ENCODE measurements at regions of chr3 and their contacts with region 1.

Region 1: GRCh38 chr3:42443819-42444436 is 33.5 kb upstream of the LYZL4 start:
- DNase-seq: peak; percentile 36 to 72 (median 59)
- H3K4me3 ChIP-seq: no peak overlapping the region
- H3K27ac ChIP-seq: no peak overlapping the region
- H3K4me1 ChIP-seq: no peaks in the 10 kb centered on the region
- H3K27me3 ChIP-seq: no peaks in the 10 kb centered on the region
- CTCF ChIP-seq: peak in 2 of 3 donors; percentile 37 to 47
- EP300 ChIP-seq: no peak
- POLR2A ChIP-seq: no peak

Region 2: GRCh38 chr3:41673650-41674049 is 770.3 kb before region 1 on chr3:
- intact Hi-C with region 1: loop called in 1 of 4 experiments (anchors 5 kb)
- DNase-seq: no peak
- H3K4me3 ChIP-seq: no peak overlapping the region
- H3K27ac ChIP-seq: no peak overlapping the region
- H3K4me1 ChIP-seq: no peaks in the 10 kb centered on the region
- H3K27me3 ChIP-seq: no peaks in the 10 kb centered on the region
- CTCF ChIP-seq: no peak
- EP300 ChIP-seq: no peak
- POLR2A ChIP-seq: no peak

Region 3: GRCh38 chr3:42229942-42230688 is 213.8 kb before region 1 on chr3:
- intact Hi-C with region 1: loop called in 1 of 4 experiments (anchors 5 kb)
- DNase-seq: no peak
- H3K4me3 ChIP-seq: no peak overlapping the region
- H3K27ac ChIP-seq: no peak overlapping the region
- H3K4me1 ChIP-seq: no peaks in the 10 kb centered on the region
- H3K27me3 ChIP-seq: no peaks in the 10 kb centered on the region
- CTCF ChIP-seq: peak in 1 of 3 donors; percentile 19
- EP300 ChIP-seq: no peak
- POLR2A ChIP-seq: no peak

Measured in ovary (tissue), 10 donors.